GM10248 (cell line): ENCODE measurements at regions of chr4 and their contacts with region 1.

Region 1: GRCh38 chr4:40976343-40976742 is 226.6 kb downstream of the NSUN7 start:
- DNase-seq: peak; percentile 49
- CTCF ChIP-seq: peak; percentile 49

Region 2: DNA sequence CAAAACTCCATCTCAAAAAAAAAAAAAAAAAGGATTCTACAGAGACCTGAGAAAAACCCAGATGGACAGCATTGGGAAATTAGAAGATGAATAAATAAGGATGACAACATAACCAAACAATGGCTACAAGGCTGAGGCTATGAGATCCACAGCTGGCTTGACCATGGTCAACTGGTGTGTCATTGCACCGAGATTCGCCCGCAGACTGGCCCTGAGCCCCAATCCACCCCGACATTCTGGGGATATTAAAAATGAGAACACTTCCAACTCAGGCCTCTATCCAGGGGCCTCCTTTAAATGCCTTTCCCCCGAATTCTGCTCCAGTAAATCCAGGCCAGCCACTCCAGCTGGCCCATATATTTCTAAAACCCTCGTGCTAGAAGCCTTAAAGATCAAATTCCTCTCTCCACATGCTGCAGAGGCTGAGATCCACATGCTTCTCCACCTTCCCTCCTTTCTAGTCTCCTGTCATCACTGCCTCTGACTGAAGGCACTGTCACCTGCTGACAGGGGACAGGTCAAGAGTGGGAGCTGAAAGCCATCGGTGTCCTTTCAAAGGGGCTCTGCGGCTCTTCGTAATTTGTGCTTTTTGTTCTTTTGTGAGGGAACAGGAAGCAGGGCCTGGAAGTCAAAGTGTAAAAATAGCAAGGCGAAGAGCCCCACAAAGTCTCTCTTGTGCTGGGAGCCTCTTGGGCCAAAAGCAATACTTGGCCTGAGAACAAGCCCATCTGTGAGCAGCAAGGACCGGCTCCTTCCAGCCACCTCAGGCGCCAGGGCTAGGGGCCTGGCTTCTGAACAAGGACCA is 22.9 kb before region 1 on chr4:
- CTCF ChIA-PET with region 1: no interaction called
- POLR2A ChIA-PET with region 1: no interaction called
- DNase-seq: no peak
- CTCF ChIP-seq: no peak

Region 3: DNA sequence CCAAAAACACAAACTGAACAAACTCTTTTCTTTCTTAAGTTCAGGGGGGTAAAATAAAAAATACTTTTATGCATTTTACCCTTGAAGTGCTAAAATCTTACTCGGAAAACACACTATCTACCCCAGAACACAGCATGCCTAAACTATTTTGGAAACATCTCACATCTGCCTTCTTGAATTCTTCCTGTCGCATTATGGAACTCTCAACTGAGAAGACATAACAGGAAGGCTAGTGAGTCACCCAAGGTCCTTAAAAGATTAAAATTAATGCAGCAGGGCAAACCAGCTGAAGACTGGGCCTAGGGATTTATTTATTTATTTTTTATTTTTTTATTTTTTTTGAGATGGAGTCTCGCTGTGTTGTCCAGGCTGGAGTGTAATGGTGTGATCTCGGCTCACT is 29.8 kb after region 1 on chr4:
- CTCF ChIA-PET with region 1: no interaction called
- POLR2A ChIA-PET with region 1: no interaction called
- DNase-seq: no peak
- CTCF ChIP-seq: no peak

Region 4: GRCh38 chr4:41214136-41214824 is 237.9 kb after region 1 on chr4 and contains the start of gene APBB2:
- CTCF ChIA-PET with region 1: interaction called, 85 read pairs
- POLR2A ChIA-PET with region 1: no interaction called
- DNase-seq: peak; percentile 86
- CTCF ChIP-seq: peak; percentile 72

Region 5: DNA sequence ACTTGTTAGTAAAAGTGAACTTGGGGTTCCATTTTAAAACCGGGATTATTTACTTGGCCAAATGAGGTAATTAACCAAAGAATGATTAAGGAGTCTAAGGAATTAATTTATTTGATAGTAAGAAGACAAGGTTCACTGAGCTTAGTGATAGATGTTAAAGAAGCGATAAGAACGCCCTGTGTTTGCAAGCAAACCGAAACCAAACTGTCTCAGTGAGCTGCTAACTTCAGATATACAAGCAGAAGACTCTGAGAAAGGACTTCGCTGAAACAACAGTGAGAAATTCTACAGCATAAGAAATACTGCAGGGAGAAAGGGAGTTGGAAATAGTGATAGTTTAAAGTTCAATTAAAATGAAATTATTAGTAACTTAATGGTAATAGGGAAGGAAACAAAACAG is 1383.4 kb after region 1 on chr4:
- CTCF ChIA-PET with region 1: no interaction called
- POLR2A ChIA-PET with region 1: no interaction called
- DNase-seq: no peak
- CTCF ChIP-seq: no peak